B cell (primary cell): ENCODE measurements at regions of chr1 and their contacts with region 1.

Region 1: GRCh38 chr1:160428655-160429054 is 28.3 kb downstream of the VANGL2 start:
- DNase-seq: peak; percentile 70
- ATAC-seq: peak; percentile 19
- H3K4me3 ChIP-seq: no peak overlapping the region
- H3K4me3 Mint-ChIP-seq: peak overlapping the region; percentile 38
- H3K27ac ChIP-seq: peak overlapping the region; percentile 88 to 89
- H3K27ac Mint-ChIP-seq: peak overlapping the region; percentile 99
- H3K4me1 ChIP-seq: peaks cover 57 to 60% of the 10 kb centered on the region in 2 donors
- H3K4me1 Mint-ChIP-seq: peaks cover 55% of the 10 kb centered on the region
- H3K27me3 ChIP-seq: no peaks in the 10 kb centered on the region
- H3K27me3 Mint-ChIP-seq: no peaks in the 10 kb centered on the region
- CTCF ChIP-seq: peak; percentile 67

Region 2: DNA sequence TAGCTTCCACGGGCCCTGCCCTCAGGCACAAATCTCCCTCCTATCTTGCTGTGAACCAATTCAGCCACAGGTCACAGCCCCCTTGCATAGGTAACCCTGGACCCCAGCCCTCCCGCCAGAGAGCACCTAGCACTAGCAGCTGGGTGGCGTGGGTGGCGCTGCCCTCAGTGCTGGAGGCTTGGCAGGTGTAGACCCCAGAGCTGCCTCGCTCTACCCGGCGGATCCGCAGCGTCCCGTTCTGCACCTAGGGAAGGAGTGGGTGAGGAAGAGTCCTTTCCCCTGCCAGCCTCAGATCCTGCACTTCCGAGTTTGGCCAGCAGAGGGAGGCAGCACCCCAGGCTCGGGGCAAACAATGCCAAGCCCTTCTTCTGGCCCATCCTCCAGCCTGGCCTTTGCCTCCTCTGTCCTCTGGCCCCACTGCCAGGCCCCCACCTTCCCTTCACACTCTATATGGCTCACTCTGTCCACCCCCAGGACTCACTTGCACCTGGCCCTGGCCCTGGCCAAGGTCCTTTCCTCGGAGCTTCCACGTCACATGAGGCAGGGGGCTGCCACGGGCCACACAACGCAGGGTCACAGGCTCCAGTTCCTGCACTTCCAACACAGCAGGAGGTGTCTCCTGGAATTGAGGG is 492.3 kb before region 1 on chr1:
- CTCF ChIA-PET with region 1: no interaction called
- POLR2A ChIA-PET with region 1: no interaction called
- intact Hi-C with region 1: no loop called
- DNase-seq: peak; percentile 85
- ATAC-seq: peak; percentile 89
- H3K4me3 ChIP-seq: peak overlapping the region in 1 of 5 experiments; percentile 17
- H3K4me3 Mint-ChIP-seq: peak overlapping the region; percentile 49
- H3K27ac ChIP-seq: no peak overlapping the region
- H3K27ac Mint-ChIP-seq: peak overlapping the region; percentile 61
- H3K4me1 ChIP-seq: peaks cover 37 to 43% of the 10 kb centered on the region in 2 donors
- H3K4me1 Mint-ChIP-seq: peaks cover 47% of the 10 kb centered on the region
- H3K27me3 ChIP-seq: no peaks in the 10 kb centered on the region
- H3K27me3 Mint-ChIP-seq: peaks cover 4% of the 10 kb centered on the region
- CTCF ChIP-seq: peak; percentile 96

Region 3: DNA sequence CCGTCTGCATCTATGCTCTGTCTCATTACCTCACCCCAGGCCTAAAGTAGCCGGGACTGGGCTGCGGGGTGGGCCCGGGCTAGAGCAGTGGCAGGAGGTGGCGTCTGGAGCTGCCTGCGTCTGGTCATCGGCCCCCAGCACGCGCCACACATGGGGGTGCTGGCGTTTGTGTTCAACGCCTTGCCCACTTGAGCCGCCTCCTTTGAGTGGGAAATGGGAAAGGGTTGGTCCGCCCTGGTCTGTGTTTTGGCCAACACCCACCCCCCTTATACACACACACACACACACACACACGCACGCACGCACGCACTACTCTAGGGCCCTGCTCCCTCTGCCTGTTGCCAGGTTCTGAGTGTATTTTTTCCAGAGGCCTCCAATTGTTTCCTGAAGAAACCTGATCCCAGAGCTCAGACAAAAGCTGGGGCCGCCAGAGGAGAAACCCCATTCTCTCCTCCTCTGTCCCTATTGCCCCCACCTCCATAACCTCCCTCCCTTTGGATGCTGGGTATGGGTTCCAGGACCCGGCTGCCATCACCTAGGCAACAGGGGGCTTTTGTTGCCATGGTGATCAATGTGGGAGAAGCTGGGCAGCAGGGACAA is 18.1 kb before region 1 on chr1:
- CTCF ChIA-PET with region 1: no interaction called
- POLR2A ChIA-PET with region 1: no interaction called
- intact Hi-C with region 1: no loop called
- DNase-seq: no peak
- ATAC-seq: no peak
- H3K4me3 ChIP-seq: no peak overlapping the region
- H3K4me3 Mint-ChIP-seq: no peak overlapping the region
- H3K27ac ChIP-seq: no peak overlapping the region
- H3K27ac Mint-ChIP-seq: no peak overlapping the region
- H3K4me1 ChIP-seq: no peaks in the 10 kb centered on the region
- H3K4me1 Mint-ChIP-seq: no peaks in the 10 kb centered on the region
- H3K27me3 ChIP-seq: no peaks in the 10 kb centered on the region
- H3K27me3 Mint-ChIP-seq: no peaks in the 10 kb centered on the region
- CTCF ChIP-seq: no peak

Region 4: DNA sequence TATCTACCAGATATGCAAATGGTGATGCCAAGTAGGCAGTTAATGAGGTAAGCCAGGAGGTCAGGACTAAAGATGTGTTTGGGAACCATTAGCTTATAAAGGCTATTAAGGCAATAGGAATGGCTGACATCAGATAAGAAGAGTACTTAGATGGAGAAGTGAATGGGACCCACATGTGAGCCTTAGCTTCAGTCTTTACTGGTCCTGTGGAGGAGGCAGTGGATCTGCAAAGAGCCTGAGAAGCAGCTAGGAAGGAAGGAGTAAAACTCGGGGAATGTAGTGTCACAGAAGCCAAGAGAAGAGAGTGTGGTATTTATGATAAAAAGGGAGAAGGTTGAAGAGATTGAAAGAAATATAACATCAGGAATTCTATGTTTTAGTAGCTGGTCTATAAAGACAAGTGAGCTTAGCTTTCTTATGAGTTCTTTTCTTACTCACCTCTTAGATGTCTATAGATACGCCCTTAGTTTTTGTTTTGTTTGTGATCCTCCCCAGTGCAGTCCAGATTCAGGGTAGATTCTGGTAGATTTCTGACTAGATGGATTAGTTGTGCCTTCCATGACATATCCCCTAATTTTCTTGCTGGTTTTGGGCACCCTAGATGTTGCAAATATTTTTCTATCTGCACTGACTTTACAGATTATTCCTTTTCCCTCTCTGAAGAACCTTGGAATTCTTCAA is 55.0 kb after region 1 on chr1:
- CTCF ChIA-PET with region 1: interaction called, 62 read pairs
- POLR2A ChIA-PET with region 1: interaction called, 17 read pairs
- intact Hi-C with region 1: loop called (anchors 1 kb)
- DNase-seq: no peak
- ATAC-seq: no peak
- H3K4me3 ChIP-seq: no peak overlapping the region
- H3K4me3 Mint-ChIP-seq: peak overlapping the region; percentile 15
- H3K27ac ChIP-seq: peak overlapping the region; percentile 35 to 50
- H3K27ac Mint-ChIP-seq: peak overlapping the region; percentile 89
- H3K4me1 ChIP-seq: peaks cover 70 to 73% of the 10 kb centered on the region in 2 donors
- H3K4me1 Mint-ChIP-seq: peaks cover 50% of the 10 kb centered on the region
- H3K27me3 ChIP-seq: no peaks in the 10 kb centered on the region
- H3K27me3 Mint-ChIP-seq: no peaks in the 10 kb centered on the region
- CTCF ChIP-seq: no peak

Region 5: GRCh38 chr1:160539990-160540858 is 111.6 kb after region 1 on chr1:
- CTCF ChIA-PET with region 1: interaction called, 128 read pairs
- POLR2A ChIA-PET with region 1: no interaction called
- intact Hi-C with region 1: loop called (anchors 2 kb)
- DNase-seq: peak; percentile 81
- ATAC-seq: peak; percentile 97
- H3K4me3 ChIP-seq: peak overlapping the region in 1 of 5 experiments; percentile 19
- H3K4me3 Mint-ChIP-seq: peak overlapping the region; percentile 63
- H3K27ac ChIP-seq: peak overlapping the region; percentile 72 to 90
- H3K27ac Mint-ChIP-seq: peak overlapping the region; percentile 93
- H3K4me1 ChIP-seq: peaks cover 46% of the 10 kb centered on the region in 2 donors
- H3K4me1 Mint-ChIP-seq: peaks cover 48% of the 10 kb centered on the region
- H3K27me3 ChIP-seq: no peaks in the 10 kb centered on the region
- H3K27me3 Mint-ChIP-seq: no peaks in the 10 kb centered on the region
- CTCF ChIP-seq: no peak

Region 6: GRCh38 chr1:160597705-160598104 is 169.1 kb after region 1 on chr1:
- CTCF ChIA-PET with region 1: interaction called, 13 read pairs
- POLR2A ChIA-PET with region 1: no interaction called
- intact Hi-C with region 1: no loop called
- DNase-seq: no peak
- ATAC-seq: no peak
- H3K4me3 ChIP-seq: no peak overlapping the region
- H3K4me3 Mint-ChIP-seq: no peak overlapping the region
- H3K27ac ChIP-seq: no peak overlapping the region
- H3K27ac Mint-ChIP-seq: no peak overlapping the region
- H3K4me1 ChIP-seq: no peaks in the 10 kb centered on the region
- H3K4me1 Mint-ChIP-seq: peaks cover 2% of the 10 kb centered on the region
- H3K27me3 ChIP-seq: no peaks in the 10 kb centered on the region
- H3K27me3 Mint-ChIP-seq: no peaks in the 10 kb centered on the region
- CTCF ChIP-seq: no peak

Region 7: DNA sequence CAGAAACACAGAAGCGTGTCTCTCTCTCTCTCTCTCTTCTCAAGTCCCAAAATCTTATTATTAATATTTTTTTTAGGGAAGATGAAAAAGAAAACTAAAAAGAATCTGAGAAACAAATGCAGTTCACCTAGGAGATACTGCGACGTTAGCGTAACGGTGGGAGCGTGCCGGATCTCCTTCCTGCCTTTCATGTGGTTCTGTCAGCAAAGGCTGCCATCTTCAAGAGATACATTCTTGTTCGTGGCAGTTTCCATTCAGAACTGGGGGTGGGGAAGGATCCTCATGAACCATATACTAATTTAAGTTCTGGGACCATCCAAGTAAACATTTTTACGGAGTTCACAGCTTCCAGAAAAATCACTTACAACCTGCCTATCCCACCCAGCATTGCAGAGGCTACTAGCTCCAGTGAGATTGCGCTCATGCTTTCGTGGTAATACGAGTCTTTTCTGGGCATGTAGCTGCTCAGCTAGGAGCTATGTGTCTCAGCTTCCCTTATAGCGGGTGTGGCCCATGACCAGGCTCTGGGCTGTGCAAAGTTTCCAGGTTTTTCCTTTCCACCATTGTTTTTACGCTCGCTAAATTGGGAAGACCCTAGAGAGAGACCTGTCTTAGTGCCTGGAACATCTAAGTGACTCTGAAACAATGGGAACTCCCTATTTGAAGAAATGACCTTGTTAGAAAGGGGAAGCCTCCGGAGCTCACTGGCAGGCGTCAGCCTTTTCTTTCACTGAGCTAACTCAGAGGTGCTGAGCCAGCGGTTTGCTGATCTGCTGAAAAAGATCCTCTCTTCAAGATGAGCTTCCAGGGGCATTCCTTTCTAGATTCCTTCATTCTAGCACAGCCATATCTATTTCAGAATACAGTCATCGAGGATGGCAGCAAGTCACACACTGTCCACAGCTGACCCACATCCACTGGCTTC is 200.9 kb after region 1 on chr1:
- CTCF ChIA-PET with region 1: interaction called, 15 read pairs
- POLR2A ChIA-PET with region 1: no interaction called
- intact Hi-C with region 1: no loop called
- DNase-seq: peak; percentile 61
- ATAC-seq: peak; percentile 50
- H3K4me3 ChIP-seq: no peak overlapping the region
- H3K4me3 Mint-ChIP-seq: peak overlapping the region; percentile 38
- H3K27ac ChIP-seq: peak overlapping the region; percentile 16 to 41
- H3K27ac Mint-ChIP-seq: peak overlapping the region; percentile 59
- H3K4me1 ChIP-seq: peaks cover 84 to 95% of the 10 kb centered on the region in 2 donors
- H3K4me1 Mint-ChIP-seq: peaks cover 92% of the 10 kb centered on the region
- H3K27me3 ChIP-seq: no peaks in the 10 kb centered on the region
- H3K27me3 Mint-ChIP-seq: no peaks in the 10 kb centered on the region
- CTCF ChIP-seq: no peak